Caco-2 (cell line): ENCODE measurements at regions of chr1 and their contacts with region 1.

Region 1: DNA sequence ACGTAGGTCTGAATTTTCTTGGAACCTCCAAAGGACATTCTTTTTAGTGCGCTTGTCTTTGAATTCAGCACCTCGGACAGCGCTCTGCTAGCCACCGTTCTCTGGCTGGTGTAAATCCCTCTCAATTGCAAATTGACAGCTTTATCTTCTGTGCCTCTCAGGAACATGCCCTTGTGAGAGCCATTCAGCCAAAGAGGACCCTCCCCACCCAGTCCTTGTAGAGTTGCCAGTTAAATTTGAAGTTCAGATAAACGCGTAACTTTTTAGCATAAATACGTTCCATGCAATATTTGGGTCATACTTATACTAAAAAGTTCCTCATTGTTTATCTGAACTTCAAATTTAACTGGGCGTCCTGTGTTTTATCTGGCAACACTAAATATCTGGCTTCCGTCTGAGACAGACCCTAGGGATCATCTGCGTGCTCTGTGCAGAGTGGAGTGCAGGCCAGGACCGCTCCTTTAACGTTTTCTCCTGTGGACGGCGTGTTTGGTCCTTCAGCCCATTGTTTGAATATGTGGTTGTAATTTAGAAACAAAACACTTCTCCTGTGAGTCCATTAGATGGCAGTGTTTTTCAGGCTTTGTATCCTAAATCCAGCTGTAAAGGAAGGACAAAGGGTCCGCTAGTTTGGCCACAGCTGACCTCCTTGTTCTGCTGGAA is 7.0 kb downstream of the KCNAB2 start:
- DNase-seq: peak in 1 of 2 experiments; percentile 72
- H3K4me3 ChIP-seq: no peak overlapping the region
- H3K4me3 Mint-ChIP-seq: no peak overlapping the region
- H3K27ac Mint-ChIP-seq: no peak overlapping the region
- H3K4me1 ChIP-seq: no peaks in the 10 kb centered on the region
- H3K4me1 Mint-ChIP-seq: no peaks in the 10 kb centered on the region
- H3K27me3 ChIP-seq: no peaks in the 10 kb centered on the region
- H3K27me3 Mint-ChIP-seq: no peaks in the 10 kb centered on the region
- CTCF ChIP-seq: peak; percentile 41 to 52

Region 2: DNA sequence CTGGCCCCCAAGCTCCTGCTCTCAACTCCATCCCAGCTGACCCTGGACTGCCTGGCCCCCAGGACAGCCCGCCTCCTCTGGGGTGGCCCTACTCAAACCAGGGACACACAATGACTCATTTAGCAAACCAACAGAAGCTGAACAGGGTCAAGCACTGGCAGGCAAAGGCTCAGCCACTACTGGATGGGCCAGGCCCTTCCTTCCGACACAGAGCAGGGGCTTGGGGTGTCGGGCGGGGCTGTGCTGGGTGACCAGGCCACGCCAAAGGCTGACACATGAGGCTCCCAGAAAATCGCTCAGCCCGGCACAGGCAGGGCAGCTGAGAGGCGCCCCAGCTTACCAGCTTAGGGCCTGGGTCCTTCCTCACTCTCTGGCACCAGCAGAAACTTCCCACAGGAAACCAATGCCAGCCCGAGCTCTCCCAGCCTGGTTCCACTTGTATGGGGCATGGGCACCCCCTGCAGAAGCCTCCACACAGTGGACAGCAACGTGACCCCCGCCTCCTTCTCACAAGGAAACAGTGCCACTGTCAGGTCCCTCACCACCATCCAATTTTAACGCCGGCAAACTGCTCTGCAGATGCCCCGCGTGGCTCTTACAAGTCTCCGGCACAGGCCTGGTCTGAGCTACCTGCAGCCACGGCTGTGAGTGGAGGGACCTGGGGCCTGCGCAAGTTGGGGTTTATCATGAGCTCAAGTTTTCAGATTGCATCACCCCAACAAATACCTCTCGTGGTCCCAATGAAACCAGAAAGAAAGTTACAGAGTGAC is 174.7 kb before region 1 on chr1:
- CTCF ChIA-PET with region 1: no interaction called
- POLR2A ChIA-PET with region 1: no interaction called
- intact Hi-C with region 1: no loop called
- DNase-seq: no peak
- H3K4me3 ChIP-seq: no peak overlapping the region
- H3K4me3 Mint-ChIP-seq: no peak overlapping the region
- H3K27ac Mint-ChIP-seq: no peak overlapping the region
- H3K4me1 ChIP-seq: no peaks in the 10 kb centered on the region
- H3K4me1 Mint-ChIP-seq: no peaks in the 10 kb centered on the region
- H3K27me3 ChIP-seq: no peaks in the 10 kb centered on the region
- H3K27me3 Mint-ChIP-seq: no peaks in the 10 kb centered on the region
- CTCF ChIP-seq: no peak

Region 3: DNA sequence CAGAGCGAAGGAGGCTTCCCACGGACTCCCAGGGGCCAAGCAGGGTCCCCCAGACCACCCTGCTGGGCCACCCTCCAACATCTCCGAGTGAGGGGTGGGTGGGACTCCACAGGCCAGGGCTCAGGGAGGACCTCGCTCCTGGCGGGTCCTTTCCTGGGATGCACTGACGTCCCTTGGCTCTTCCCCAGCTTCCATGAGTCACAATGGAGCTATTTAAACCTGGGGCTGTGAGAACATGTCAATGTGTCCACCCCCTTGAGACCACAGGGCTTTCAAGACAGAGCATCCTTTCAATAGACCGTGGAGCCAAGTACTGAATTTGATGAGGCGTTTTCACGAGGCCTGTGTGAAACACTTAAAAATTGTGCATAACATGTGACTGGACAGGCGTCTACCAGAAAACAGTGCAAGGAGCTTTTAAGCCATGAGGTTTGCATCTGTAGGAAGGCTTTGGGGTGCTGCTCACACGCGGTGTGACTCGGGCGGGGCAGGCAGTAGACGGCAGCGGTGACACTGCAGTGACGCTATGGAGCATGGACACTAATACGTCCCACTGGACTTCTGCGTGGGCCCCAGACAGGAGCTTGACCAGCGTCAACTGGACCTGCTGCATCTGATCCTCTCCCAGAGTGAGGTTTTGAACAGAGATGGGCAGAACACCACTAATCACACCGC is 36.3 kb before region 1 on chr1:
- CTCF ChIA-PET with region 1: no interaction called
- POLR2A ChIA-PET with region 1: no interaction called
- intact Hi-C with region 1: no loop called
- DNase-seq: no peak
- H3K4me3 ChIP-seq: no peak overlapping the region
- H3K4me3 Mint-ChIP-seq: no peak overlapping the region
- H3K27ac Mint-ChIP-seq: no peak overlapping the region
- H3K4me1 ChIP-seq: no peaks in the 10 kb centered on the region
- H3K4me1 Mint-ChIP-seq: no peaks in the 10 kb centered on the region
- H3K27me3 ChIP-seq: no peaks in the 10 kb centered on the region
- H3K27me3 Mint-ChIP-seq: no peaks in the 10 kb centered on the region
- CTCF ChIP-seq: no peak

Region 4: DNA sequence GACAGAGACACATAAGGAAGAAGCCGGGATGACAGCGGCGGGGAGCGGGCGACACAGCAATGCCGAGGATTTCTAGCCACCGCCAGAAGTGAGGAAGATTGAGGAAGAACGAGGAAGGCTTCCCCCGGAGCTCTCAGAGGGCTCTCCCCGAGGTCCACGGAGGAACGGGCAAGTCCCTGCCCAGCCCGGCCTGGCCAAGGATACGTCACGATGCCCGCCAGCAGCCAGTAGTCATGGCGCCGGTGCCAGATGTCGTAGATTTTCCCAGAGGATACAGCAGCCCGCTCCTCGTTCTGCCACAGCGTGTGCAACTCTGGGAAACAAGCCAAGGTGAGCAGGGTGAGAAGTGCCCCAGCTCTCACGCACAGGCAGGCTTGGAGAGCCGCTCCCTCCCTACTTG is 58.9 kb after region 1 on chr1:
- CTCF ChIA-PET with region 1: no interaction called
- POLR2A ChIA-PET with region 1: no interaction called
- intact Hi-C with region 1: no loop called
- DNase-seq: no peak
- H3K4me3 ChIP-seq: no peak overlapping the region
- H3K4me3 Mint-ChIP-seq: no peak overlapping the region
- H3K27ac Mint-ChIP-seq: no peak overlapping the region
- H3K4me1 ChIP-seq: no peaks in the 10 kb centered on the region
- H3K4me1 Mint-ChIP-seq: no peaks in the 10 kb centered on the region
- H3K27me3 ChIP-seq: no peaks in the 10 kb centered on the region
- H3K27me3 Mint-ChIP-seq: peaks cover 8% of the 10 kb centered on the region
- CTCF ChIP-seq: no peak

Region 5: DNA sequence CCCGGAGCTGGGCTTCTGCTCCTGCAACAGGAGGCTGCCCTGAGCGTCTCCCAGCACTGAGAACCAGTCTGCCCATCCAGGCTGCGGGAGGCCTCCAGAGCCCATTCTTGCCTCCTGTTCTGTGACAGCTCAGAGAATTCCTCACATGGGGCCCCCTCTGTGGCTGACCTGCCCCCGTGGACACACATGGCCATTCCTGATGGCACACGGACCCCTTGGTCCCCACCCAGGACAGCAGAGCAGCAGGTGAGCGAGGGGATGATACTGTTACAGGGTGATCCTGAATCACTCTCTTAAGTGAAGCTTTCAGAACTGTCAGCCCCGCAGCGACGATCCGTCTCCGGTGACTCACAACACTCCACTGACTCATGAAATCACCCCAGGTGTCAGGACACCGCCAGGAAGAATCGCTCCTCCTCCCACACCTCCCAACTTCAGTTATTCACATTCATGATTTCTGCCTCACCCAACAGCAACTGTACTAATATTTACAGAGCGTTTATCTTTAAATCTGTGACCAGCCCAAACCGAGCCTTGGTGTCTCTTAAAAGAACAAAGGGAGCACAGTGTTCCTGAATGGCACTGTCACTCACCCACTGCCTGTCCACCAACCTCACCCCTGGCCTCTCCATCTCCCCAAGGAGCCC is 105.0 kb after region 1 on chr1:
- CTCF ChIA-PET with region 1: no interaction called
- POLR2A ChIA-PET with region 1: no interaction called
- intact Hi-C with region 1: loop called (anchors 2 kb)
- DNase-seq: peak; percentile 65 to 68
- H3K4me3 ChIP-seq: no peak overlapping the region
- H3K4me3 Mint-ChIP-seq: peak overlapping the region; percentile 56
- H3K27ac Mint-ChIP-seq: peak overlapping the region; percentile 85
- H3K4me1 ChIP-seq: peaks cover 19% of the 10 kb centered on the region
- H3K4me1 Mint-ChIP-seq: peaks cover 14% of the 10 kb centered on the region
- H3K27me3 ChIP-seq: no peaks in the 10 kb centered on the region
- H3K27me3 Mint-ChIP-seq: no peaks in the 10 kb centered on the region
- CTCF ChIP-seq: no peak